ENCODE measurements at regions of chr10 and their contacts with region 1.

Region 1: DNA sequence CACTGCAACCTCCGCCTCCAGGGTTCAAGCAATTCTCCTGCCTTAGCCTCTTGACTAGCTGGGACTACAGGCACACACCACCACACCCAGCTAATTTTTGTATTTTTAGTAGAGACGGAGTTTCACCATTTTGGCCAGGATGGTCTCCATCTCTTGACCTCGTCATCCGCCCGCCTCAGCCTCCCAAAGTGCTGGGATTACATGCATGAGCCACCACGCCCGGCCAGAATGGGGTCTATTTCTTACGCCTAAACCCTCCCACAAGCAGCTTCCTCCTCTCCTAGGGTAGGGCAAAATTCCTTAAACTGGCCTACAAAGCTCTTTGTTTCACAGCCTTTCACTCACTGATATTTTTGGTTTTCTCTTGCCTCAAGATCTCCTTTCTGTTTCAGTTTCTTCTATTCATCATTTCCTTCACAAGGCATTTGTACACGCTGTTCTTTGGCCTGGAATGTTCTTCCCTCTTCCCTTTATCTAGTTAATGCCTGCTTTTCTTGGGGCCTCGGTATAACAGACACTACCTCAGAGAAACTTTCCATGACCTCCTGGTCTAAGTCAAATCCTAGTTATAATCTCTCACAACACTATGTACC is 6.7 kb downstream of the CPEB3 start:
- DNase-seq: no peak
- H3K4me3 ChIP-seq: no peak overlapping the region
- H3K27ac ChIP-seq: peak overlapping the region in 1 of 2 donors; percentile 39
- H3K4me1 ChIP-seq: peaks cover 1% of the 10 kb centered on the region
- H3K27me3 ChIP-seq: no peaks in the 10 kb centered on the region
- CTCF ChIP-seq: no peak
- EP300 ChIP-seq: no peak
- POLR2A ChIP-seq: no peak

Region 2: DNA sequence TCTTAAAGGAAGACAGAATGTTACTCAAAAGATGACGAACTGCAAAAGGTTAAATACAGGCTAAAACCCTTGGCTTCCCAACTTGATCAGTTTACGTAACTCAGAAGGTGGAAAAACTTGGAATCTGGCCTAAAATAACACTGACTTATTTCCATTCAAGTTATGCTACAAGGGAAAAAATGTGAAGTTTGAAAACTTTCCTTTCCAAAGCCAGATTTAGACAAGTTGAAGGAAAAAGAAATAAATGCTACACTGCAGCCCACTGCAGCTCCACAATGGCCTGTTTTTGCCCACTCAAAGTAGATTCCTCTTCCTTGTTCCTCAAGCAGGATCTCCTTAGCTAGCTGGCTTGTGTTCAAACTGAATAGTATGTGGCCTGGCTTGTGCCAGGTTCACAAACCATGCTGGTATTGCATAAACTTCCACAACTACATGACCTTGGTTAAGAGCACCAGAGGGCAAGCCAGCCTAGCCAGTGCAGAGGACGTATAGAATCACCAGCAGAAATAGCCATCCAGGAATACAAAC is 159.5 kb before region 1 on chr10:
- intact Hi-C with region 1: no loop called
- DNase-seq: peak in 2 of 5 donors; percentile 15 to 39
- H3K4me3 ChIP-seq: no peak overlapping the region
- H3K27ac ChIP-seq: peak overlapping the region in 1 of 2 donors; percentile 74
- H3K4me1 ChIP-seq: peaks cover 27% of the 10 kb centered on the region
- H3K27me3 ChIP-seq: no peaks in the 10 kb centered on the region
- CTCF ChIP-seq: no peak
- EP300 ChIP-seq: no peak
- POLR2A ChIP-seq: no peak

Region 3: DNA sequence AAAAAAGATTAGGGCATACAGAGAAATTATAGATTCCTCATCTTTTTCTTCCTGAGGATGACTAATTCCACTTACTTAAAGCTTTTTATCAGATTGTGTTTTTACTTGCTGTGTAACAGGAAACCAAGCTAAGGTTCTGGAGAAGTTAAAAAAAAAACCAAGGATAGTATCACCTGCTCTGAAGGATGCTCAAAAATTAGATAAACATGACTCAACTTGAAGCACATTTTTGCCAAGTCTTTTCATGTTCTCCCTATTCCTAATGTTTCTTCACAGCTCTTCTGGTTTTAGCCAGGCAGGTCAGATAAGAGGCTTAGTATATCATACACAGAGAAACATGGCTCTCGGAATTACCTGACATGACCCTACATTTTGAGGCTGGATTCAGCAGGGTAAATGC is 83.6 kb before region 1 on chr10:
- intact Hi-C with region 1: no loop called
- DNase-seq: no peak
- H3K4me3 ChIP-seq: no peak overlapping the region
- H3K27ac ChIP-seq: no peak overlapping the region
- H3K4me1 ChIP-seq: no peaks in the 10 kb centered on the region
- H3K27me3 ChIP-seq: no peaks in the 10 kb centered on the region
- CTCF ChIP-seq: no peak
- EP300 ChIP-seq: no peak
- POLR2A ChIP-seq: no peak

Region 4: GRCh38 chr10:92239600-92240288 is 44.5 kb before region 1 on chr10:
- intact Hi-C with region 1: loop called in 1 of 4 experiments (anchors 10 kb)
- DNase-seq: peak; percentile 53 to 78 (median 67)
- H3K4me3 ChIP-seq: peak overlapping the region; percentile 49
- H3K27ac ChIP-seq: peak overlapping the region; percentile 81 to 89
- H3K4me1 ChIP-seq: peaks cover 6% of the 10 kb centered on the region
- H3K27me3 ChIP-seq: no peaks in the 10 kb centered on the region
- CTCF ChIP-seq: no peak
- EP300 ChIP-seq: no peak
- POLR2A ChIP-seq: no peak

Region 5: DNA sequence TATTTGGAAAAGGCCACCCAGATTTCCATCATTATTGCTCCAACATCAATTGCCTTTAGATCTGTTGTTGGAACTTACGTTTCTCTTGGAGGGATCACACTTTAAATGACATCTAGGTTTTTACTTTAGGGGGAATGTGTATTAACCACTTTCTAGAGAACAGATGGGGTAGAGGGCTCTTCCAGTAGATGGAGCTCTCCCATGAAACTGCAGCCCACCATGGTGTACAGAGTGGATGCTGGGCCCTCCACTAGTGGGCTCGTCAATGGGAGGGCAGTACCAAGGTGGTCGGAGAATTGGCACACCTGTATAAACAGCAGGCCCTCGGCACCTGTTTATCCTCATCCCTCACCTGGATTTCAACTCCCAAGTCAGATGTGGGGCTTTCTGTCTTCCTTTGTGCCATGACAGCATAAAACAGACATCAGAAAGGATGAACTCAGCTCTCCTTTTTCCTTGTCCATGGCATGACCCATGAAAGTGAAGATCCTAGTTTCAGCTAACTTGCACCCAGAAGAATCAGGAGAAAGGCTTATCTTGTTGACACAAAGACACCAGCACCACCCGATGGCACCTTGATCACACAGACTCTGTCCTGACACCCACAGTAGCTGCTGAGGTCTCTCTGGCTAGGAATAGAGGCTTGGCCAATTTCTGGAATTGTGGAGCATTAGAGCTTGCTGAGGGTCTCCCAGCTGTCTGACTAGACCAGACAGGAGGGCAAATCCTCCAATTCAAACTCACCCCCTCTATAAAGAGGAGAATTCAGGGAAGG is 940.0 kb after region 1 on chr10:
- intact Hi-C with region 1: no loop called
- DNase-seq: no peak
- H3K4me3 ChIP-seq: no peak overlapping the region
- H3K27ac ChIP-seq: no peak overlapping the region
- H3K4me1 ChIP-seq: peaks cover 3% of the 10 kb centered on the region
- H3K27me3 ChIP-seq: no peaks in the 10 kb centered on the region
- CTCF ChIP-seq: no peak
- EP300 ChIP-seq: no peak
- POLR2A ChIP-seq: no peak

Measured in ovary (tissue), 10 donors.